ENCODE measurements at regions of chr5 and their contacts with region 1.

Region 1: DNA sequence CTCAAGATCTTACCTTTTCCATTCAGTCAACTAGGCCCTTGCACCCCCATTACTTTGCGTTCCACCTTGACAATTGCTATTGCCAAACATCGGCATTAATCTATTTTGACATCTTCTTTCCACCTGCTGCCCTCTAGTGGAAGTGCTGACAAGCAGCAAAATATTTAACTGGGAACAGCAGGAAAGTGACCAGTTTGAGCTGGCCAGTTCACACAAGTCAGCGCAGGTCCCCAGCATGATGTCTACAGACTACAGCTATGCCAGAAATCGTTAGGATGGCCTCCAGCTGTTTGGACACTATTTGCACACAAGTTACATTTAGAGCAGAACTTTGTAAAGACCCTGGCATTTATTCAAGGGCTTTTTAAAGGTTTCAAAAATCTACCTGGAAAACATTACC is 160.1 kb downstream of the GHR start:
- DNase-seq: peak; percentile 78
- H3K4me3 ChIP-seq: no peak overlapping the region
- H3K27ac ChIP-seq: no peak overlapping the region
- H3K4me1 ChIP-seq: peaks cover 5% of the 10 kb centered on the region
- H3K27me3 ChIP-seq: no peaks in the 10 kb centered on the region
- CTCF ChIP-seq: peak; percentile 90 to 92

Region 2: DNA sequence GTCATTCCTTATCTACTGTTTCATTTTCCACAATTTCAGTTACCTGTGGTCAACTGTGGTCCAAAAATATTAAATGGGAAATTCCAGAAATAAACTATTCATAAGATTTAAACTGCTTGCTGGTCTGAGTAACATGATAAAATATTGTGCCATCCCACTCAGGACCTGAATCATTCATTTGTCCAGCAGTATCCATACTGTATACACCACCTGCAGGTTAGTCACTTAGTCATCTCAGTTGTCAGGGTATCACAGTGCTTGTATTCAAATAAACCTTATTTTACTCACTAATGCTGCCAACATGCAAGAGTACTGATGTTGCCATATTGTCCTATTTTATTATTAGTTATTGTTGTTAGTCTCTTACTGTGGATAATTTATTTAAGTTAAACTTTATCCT is 518.5 kb before region 1 on chr5:
- CTCF ChIA-PET with region 1: no interaction called
- dilution Hi-C with region 1: no loop called
- in situ Hi-C with region 1: no loop called
- intact Hi-C with region 1: loop called (anchors 5 kb)
- DNase-seq: peak; percentile 96
- H3K4me3 ChIP-seq: no peak overlapping the region
- H3K27ac ChIP-seq: peak overlapping the region; percentile 62
- H3K4me1 ChIP-seq: peaks cover 7% of the 10 kb centered on the region
- H3K27me3 ChIP-seq: no peaks in the 10 kb centered on the region
- CTCF ChIP-seq: no peak

Region 3: DNA sequence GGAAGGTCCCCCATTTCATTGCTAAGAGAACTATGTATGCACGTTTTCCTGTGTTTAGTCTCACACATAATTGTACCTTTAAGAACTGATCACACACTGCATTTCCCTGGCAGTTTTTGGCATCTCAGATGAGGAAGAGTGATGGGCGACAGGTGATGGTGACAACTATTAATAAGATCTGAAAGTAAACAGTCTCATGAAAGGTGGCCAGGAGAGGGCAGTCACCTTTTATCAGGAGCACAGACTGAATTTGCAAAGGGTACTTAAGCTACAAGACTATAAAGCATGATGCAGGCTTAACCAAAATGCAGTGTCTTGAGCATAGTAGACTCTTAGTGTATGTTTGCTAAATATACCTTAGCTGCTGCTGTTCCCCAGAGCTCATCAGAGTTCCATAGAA is 68.6 kb before region 1 on chr5:
- CTCF ChIA-PET with region 1: interaction called, 19 read pairs
- dilution Hi-C with region 1: no loop called
- in situ Hi-C with region 1: no loop called
- intact Hi-C with region 1: loop called (anchors 1 kb)
- DNase-seq: peak; percentile 7
- H3K4me3 ChIP-seq: no peak overlapping the region
- H3K27ac ChIP-seq: no peak overlapping the region
- H3K4me1 ChIP-seq: no peaks in the 10 kb centered on the region
- H3K27me3 ChIP-seq: no peaks in the 10 kb centered on the region
- CTCF ChIP-seq: peak; percentile 30 to 56

Region 4: GRCh38 chr5:42656651-42657015 is 73.3 kb after region 1 on chr5:
- CTCF ChIA-PET with region 1: interaction called, 6 read pairs
- dilution Hi-C with region 1: no loop called
- in situ Hi-C with region 1: no loop called
- intact Hi-C with region 1: loop called (anchors 1 kb)
- DNase-seq: peak; percentile 4
- H3K4me3 ChIP-seq: peak overlapping the region; percentile 2 to 64 (median 45)
- H3K27ac ChIP-seq: peak overlapping the region; percentile 53
- H3K4me1 ChIP-seq: peaks cover 10% of the 10 kb centered on the region
- H3K27me3 ChIP-seq: no peaks in the 10 kb centered on the region
- CTCF ChIP-seq: peak; percentile 19 to 48